OCI-LY7 (cell line): ENCODE measurements at regions of chr12 and their contacts with region 1.

Region 1: DNA sequence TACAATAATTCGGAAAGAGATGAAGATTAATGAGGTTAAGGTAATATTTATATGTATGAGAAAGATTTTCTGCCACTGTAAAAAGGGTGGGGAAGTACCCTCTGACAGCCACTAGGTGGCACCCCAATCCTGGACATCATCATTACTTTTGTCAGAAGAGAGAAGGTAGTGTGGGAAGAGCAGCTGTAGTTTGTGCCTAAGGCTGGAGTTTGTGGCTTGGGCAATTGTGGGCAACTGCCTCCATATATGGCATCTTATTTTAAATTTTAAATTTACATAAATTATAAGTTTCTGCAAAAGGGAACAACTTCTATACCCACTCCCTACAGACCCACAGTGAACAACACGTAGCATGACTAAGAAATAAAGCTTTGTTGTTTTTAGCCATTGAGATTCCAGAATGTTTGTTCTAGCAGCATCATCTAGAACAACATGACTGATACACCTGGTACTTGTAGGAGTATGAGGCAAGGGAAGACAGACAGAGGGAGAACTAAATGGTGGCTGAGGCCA is 34.4 kb upstream of the SYCP3 start:
- DNase-seq: peak; percentile 78
- H3K4me3 ChIP-seq: no peak overlapping the region
- H3K27ac ChIP-seq: peak overlapping the region; percentile 95
- H3K4me1 ChIP-seq: peaks cover 51% of the 10 kb centered on the region
- CTCF ChIP-seq: peak; percentile 98

Region 2: DNA sequence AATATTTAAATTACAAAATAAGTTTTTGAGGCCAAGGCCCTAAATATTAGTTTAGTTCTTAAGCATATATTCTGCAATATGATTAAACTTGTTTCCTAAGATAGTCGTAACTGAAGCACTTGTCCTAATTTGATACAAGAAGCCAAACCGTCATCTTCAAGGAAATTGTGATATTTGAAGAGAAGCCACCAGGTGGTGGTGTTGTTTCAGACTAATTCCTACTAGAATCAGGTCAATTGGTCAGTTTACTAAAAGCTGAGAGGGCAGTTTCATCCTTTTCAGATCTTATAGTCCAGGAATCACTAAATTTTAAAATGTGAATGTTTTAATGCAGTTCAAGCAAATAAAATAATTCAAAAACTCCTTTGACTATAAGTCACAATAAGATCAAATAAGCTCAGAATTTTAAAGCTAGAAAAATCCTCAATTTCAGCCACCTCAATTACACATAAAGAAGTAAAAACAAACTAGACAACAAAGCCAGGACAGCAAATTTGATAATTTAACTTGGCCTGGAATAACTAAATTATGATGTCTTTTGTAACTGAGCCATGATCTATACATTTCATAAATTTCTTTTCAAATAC is 359.1 kb before region 1 on chr12:
- CTCF ChIA-PET with region 1: no interaction called
- POLR2A ChIA-PET with region 1: no interaction called
- intact Hi-C with region 1: loop called (anchors 1 kb)
- DNase-seq: peak; percentile 73
- H3K4me3 ChIP-seq: no peak overlapping the region
- H3K27ac ChIP-seq: no peak overlapping the region
- H3K4me1 ChIP-seq: peaks cover 4% of the 10 kb centered on the region
- CTCF ChIP-seq: peak; percentile 93

Region 3: DNA sequence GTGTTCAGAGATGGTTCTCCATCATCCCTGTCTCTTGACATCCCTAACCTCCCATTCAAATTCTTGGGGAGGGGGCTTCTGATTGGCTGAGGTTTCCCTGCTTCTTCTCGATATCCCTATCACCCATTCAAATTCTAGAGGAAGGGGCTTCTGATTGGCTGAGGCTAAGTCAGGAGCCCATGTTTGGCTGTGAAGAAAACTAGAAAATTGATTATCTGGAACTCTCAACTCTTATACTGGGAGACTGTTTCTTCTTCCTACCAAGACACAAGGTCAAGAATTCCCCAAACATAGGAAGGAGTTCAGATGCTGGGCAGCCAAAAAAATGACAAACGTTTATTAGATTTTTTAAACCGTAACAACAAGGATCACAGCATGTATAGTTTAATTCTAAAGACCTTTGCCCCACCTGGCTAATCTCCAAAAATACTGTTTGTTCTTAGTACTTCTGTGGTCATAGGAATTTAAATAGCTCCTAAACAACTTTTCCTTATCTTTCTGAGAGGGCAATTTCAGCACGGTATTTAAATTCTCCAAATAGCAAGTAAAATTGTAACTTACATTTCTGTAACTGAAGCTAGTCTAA is 272.2 kb before region 1 on chr12:
- CTCF ChIA-PET with region 1: no interaction called
- POLR2A ChIA-PET with region 1: no interaction called
- intact Hi-C with region 1: no loop called
- DNase-seq: no peak
- H3K4me3 ChIP-seq: no peak overlapping the region
- H3K27ac ChIP-seq: no peak overlapping the region
- H3K4me1 ChIP-seq: no peaks in the 10 kb centered on the region
- CTCF ChIP-seq: no peak

Region 4: GRCh38 chr12:101743724-101744472 is 29.8 kb before region 1 on chr12:
- CTCF ChIA-PET with region 1: interaction called, 11 read pairs
- POLR2A ChIA-PET with region 1: interaction called, 9 read pairs
- intact Hi-C with region 1: loop called (anchors 1 kb)
- DNase-seq: peak; percentile 93
- H3K4me3 ChIP-seq: peak overlapping the region; percentile 47
- H3K27ac ChIP-seq: peak overlapping the region; percentile 95
- H3K4me1 ChIP-seq: peaks cover 66% of the 10 kb centered on the region
- CTCF ChIP-seq: peak; percentile 79

Region 5: DNA sequence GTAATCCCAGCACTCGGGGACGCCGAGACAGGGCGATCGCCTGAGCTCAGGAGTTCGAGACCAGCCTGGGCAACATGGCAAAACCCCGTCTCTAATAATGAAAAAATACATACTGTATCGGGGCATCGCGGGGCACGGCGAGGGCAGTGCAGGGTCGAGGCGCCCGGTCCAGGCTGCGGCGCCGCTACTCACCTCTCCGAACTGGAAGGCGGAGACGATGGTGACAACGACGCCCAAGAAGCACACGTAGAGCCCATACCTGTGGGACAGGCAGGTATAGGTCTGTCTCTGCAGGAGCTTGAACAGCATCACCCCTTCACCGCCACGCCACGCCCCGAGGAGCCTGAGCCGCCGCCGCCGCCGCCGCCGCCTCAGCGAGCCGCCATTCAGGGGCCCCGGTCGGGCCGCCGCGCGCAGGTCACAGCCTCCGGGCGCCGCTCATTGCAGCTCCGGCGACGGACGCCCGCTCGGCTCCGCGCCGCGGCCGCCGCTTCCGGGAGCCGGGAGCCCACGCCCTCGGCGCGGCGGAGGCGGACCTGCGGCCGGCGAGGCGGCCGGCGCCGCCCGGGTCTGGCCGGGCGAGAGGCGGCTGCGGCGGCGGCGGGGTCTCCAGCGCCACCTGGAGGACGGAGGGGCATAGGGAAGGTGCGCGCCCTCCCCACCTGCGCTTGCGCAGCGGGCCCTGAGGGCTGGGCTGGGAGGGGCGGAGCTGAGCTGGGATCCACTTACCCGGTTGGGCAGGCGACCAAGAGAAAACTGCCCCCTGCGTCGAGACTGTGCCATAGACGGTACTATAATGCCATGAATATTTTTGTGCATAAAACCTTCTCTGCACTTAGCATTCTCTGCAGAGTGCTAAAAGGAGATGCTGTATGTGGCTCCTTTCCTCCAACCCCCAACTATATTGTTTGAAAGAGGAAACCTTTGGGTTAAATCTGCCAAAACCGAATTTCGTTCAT is 56.9 kb after region 1 on chr12 and contains the start of gene GNPTAB:
- CTCF ChIA-PET with region 1: interaction called, 34 read pairs
- POLR2A ChIA-PET with region 1: interaction called, 75 read pairs
- intact Hi-C with region 1: loop called (anchors 1 kb)
- DNase-seq: peak; percentile 96
- H3K4me3 ChIP-seq: peak within 1 kb of the TSS; percentile 79
- H3K27ac ChIP-seq: peak within 1 kb of the TSS; percentile 70
- H3K4me1 ChIP-seq: peaks cover 49% of the 10 kb centered on the region
- CTCF ChIP-seq: peak; percentile 74
- total RNA-seq, gene GNPTAB: 35.8 and 38.9 TPM in 2 replicates

Region 6: DNA sequence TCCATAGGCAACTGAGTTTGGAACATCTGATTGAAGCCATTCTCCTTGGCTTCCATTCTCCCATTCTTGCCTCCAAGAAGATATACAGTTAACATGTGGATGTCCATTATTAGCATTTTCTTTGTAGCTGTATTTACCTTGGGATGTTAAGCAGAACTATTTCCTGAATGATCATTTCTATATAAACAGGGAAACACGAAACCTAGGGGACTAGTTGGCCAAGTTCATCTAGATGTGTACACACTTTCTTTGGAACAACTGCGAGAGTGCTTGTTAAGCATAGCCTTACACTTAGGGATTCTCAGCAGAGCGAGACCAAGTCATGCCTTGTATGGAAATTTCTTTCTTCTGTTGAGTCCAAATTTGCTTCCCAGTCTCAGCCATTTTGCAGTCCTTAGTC is 145.7 kb after region 1 on chr12:
- CTCF ChIA-PET with region 1: interaction called, 3 read pairs
- POLR2A ChIA-PET with region 1: no interaction called
- intact Hi-C with region 1: loop called (anchors 2 kb)
- DNase-seq: no peak
- H3K4me3 ChIP-seq: no peak overlapping the region
- H3K27ac ChIP-seq: no peak overlapping the region
- H3K4me1 ChIP-seq: peaks cover 11% of the 10 kb centered on the region
- CTCF ChIP-seq: no peak

Region 7: DNA sequence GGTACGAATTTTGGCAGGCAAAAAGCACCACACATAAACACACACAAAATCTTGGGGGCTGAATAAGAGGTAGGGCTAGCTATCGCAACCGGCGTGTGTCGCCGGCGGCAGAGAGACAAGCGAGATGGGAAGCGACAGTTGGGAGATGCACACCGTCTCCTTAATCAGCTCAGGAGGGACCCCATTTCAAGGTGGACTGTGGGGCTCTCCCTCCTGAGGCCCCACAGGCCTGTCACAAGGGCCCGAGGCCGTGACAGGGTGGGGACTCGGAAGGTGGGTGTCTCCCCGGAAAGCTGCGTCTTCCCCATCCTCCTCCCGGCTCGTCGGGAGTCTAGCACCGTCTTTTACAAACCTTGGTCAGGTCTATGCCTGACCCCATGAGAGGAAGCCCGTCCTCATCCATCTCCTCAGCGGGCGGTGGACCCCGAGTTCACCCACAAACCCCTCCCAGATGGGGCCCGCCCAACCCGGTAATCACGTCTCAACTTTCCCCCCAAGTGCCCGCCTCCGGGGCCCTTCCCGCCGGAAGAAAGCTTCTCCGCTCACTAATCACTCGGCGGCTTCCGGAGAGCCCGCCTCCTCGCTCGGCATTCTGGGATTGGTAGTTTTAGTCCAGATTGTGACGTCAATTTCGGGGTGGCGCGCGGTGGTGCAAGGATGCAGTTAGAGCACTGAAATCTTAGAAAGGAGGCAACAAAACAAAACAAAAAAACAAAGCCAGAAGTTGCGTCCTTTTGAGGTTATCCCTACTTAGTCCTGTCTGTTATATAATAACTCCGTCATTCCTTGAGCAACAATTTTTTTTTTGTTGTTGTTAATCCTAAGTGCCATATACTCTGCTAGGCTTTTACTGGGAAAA is 288.1 kb after region 1 on chr12 and contains the start of gene WASHC3:
- CTCF ChIA-PET with region 1: no interaction called
- POLR2A ChIA-PET with region 1: no interaction called
- intact Hi-C with region 1: loop called (anchors 5 kb)
- DNase-seq: peak; percentile 94
- H3K4me3 ChIP-seq: peak within 1 kb of the TSS; percentile 90
- H3K27ac ChIP-seq: peak within 1 kb of the TSS; percentile 34
- H3K4me1 ChIP-seq: peaks cover 6% of the 10 kb centered on the region
- CTCF ChIP-seq: no peak
- total RNA-seq, gene WASHC3: 28.4 and 29.2 TPM in 2 replicates